ENCODE measurements at regions of chr19 and their contacts with region 1.

Region 1: DNA sequence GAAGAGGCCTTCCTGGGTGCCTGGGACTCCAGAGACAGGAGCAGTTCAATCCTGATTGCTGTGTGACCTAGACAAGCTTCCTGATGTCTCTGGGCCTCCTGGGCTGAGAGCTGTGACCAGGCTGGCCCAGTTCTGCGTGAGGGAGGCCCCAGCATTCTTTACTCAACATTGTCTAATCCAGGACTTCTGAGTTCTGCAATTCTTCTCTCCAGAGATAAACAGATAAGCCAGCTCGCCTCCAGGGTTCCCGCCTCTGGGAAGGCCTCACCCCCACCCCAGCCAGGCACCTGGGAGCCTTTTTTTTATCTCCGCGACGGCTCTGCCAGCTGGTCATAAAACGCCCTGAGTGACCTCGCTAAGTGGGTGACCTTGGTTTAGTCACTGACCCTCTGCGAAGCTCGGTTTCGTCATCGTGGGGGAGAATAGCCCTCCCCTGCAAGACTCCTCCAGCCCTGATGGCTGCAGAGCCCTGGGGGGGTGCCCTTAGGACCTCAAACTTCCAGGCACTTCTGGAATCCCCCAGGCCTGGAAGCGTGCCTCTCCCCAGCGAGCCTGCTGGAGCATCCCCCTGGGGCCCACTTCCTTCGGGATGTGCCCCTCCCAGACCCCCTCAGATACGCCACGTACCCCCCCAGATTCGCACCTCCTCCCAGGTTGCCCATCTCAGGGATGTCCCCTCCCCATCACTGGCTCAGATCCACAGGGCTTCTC is 1.9 kb downstream of the SULT2B1 start:
- DNase-seq: no peak
- ATAC-seq: peak; percentile 80
- H3K4me3 ChIP-seq: no peak overlapping the region
- H3K27ac ChIP-seq: peak overlapping the region; percentile 75
- H3K4me1 ChIP-seq: peaks cover 27% of the 10 kb centered on the region
- H3K27me3 ChIP-seq: no peaks in the 10 kb centered on the region
- CTCF ChIP-seq: no peak

Region 2: DNA sequence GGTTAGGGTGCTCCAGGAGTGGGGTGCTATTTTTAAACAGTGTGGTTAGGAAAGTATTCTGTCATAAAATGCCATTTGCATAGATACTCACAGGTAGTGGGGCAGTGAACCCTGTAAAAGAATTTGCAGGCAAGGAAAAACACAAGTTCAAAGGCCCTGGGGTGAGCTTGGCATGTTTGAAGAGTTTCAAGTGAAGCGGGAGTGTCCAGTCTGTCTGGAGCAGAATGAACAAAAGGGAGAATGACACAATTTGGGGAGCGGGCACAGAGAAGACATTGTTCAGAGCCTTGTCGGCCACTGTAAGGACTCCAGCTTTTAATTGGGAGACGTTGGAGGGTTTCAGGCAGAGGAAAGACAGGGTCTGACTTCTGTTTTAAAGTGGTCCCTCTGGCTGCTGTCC is 105.3 kb before region 1 on chr19:
- CTCF ChIA-PET with region 1: no interaction called
- POLR2A ChIA-PET with region 1: interaction called, 10 read pairs
- in situ Hi-C with region 1: no loop called
- intact Hi-C with region 1: no loop called
- DNase-seq: no peak
- ATAC-seq: no peak
- H3K4me3 ChIP-seq: no peak overlapping the region
- H3K27ac ChIP-seq: no peak overlapping the region
- H3K4me1 ChIP-seq: peaks cover 9% of the 10 kb centered on the region
- H3K27me3 ChIP-seq: no peaks in the 10 kb centered on the region
- CTCF ChIP-seq: no peak

Region 3: DNA sequence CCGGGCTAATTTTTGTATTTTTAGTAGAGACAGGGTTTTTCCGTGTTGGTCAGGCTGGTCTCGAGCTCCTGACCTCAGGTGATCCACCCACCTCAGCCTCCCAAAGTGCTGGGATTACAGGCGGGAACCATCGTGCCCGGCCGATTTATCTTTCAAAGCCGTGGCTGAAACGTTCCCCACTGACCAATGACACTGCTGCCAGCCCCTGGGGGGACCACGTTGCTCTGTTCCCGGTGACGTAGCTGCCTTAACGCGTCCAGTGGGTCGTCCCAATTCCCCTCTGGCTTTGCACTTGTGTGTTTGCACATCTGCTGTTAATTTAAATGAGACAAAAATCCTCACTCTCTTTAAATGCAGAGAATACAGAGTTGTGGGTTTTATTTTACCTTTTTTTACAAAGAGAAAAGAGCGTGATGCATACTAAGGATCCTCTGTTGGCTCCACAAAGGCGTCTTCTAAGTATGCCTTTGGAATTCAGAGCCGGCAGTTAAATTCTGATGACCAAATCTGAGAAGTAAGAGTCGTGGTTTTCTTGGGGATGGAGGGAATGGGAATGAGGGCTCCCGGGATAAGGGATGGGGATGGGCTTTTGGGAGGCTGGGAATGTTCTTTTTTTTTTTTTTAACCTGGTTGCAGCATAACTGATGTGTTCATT is 23.6 kb before region 1 on chr19:
- CTCF ChIA-PET with region 1: no interaction called
- POLR2A ChIA-PET with region 1: no interaction called
- in situ Hi-C with region 1: no loop called
- intact Hi-C with region 1: no loop called
- DNase-seq: no peak
- ATAC-seq: no peak
- H3K4me3 ChIP-seq: no peak overlapping the region
- H3K27ac ChIP-seq: peak overlapping the region; percentile 17; the same call in 1 of the 2 replicates
- H3K4me1 ChIP-seq: peaks cover 4% of the 10 kb centered on the region
- H3K27me3 ChIP-seq: no peaks in the 10 kb centered on the region
- CTCF ChIP-seq: no peak

Region 4: GRCh38 chr19:48624067-48624594 is 70.3 kb after region 1 on chr19:
- CTCF ChIA-PET with region 1: no interaction called
- POLR2A ChIA-PET with region 1: no interaction called
- in situ Hi-C with region 1: no loop called
- intact Hi-C with region 1: no loop called
- DNase-seq: no peak
- ATAC-seq: peak; percentile 90
- H3K4me3 ChIP-seq: peak overlapping the region; percentile 37 to 39
- H3K27ac ChIP-seq: peak overlapping the region; percentile 82
- H3K4me1 ChIP-seq: peaks cover 8% of the 10 kb centered on the region
- H3K27me3 ChIP-seq: no peaks in the 10 kb centered on the region
- CTCF ChIP-seq: no peak

Region 5: GRCh38 chr19:49255674-49256073 is 701.8 kb after region 1 on chr19:
- CTCF ChIA-PET with region 1: no interaction called
- POLR2A ChIA-PET with region 1: interaction called, 10 read pairs
- in situ Hi-C with region 1: no loop called
- intact Hi-C with region 1: no loop called
- DNase-seq: no peak
- ATAC-seq: no peak
- H3K4me3 ChIP-seq: no peak overlapping the region
- H3K27ac ChIP-seq: no peak overlapping the region
- H3K4me1 ChIP-seq: no peaks in the 10 kb centered on the region
- H3K27me3 ChIP-seq: no peaks in the 10 kb centered on the region
- CTCF ChIP-seq: no peak

Measured in Panc1 (cell line).